ENCODE measurements at regions of chrX and their contacts with region 1.

Region 1: GRCh38 chrX:78960888-78961287 is 15.7 kb downstream of the P2RY10 start:
- DNase-seq: no peak
- H3K4me3 ChIP-seq: no peak overlapping the region
- H3K27ac ChIP-seq: no peak overlapping the region
- H3K4me1 ChIP-seq: no peaks in the 10 kb centered on the region
- H3K27me3 ChIP-seq: peaks cover 0 to 4% of the 10 kb centered on the region in 2 donors
- CTCF ChIP-seq: no peak
- POLR2A ChIP-seq: no peak

Region 2: DNA sequence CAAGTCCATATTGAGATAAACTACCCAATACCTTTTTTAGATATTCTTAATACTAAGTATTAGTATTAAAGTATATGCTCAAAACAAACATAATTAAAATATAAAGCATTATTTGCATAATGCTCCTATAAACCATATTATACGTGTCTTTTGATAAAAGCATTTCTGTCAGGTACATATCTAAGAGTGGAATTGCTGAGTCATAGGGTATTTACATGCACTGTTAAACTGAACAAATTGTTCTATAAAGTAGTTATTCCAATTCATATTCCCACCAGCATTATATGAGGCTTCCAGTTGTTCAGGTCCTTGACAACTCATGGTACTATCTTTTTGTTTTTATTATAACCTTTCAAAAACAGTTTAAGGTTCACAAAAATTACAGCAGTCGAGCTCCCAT is 1399.5 kb before region 1 on chrX:
- intact Hi-C with region 1: no loop called
- DNase-seq: no peak
- H3K4me3 ChIP-seq: no peak overlapping the region
- H3K27ac ChIP-seq: no peak overlapping the region
- H3K4me1 ChIP-seq: no peaks in the 10 kb centered on the region
- H3K27me3 ChIP-seq: no peaks in the 10 kb centered on the region
- CTCF ChIP-seq: no peak
- POLR2A ChIP-seq: no peak

Region 3: DNA sequence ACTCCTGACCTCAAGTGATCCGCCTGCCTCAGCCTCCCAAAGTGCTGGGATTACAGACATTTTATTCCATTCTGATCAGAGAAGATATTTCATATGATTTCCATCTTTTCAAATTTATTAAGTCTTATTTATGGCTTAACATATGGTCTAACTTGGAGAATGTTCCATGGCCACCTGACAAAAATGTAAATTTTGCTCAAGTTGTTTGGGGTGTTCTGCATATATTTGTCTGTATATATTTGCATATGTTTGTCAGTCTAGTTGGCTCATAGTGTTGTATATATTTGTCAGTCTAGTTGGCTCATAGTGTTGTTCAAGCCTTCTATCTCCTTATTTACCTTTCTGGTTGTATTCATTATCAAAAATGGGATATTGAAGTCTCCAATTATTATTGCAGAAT is 1158.7 kb before region 1 on chrX:
- intact Hi-C with region 1: no loop called
- DNase-seq: no peak
- H3K4me3 ChIP-seq: no peak overlapping the region
- H3K27ac ChIP-seq: no peak overlapping the region
- H3K4me1 ChIP-seq: no peaks in the 10 kb centered on the region
- H3K27me3 ChIP-seq: no peaks in the 10 kb centered on the region
- CTCF ChIP-seq: no peak
- POLR2A ChIP-seq: no peak

Region 4: GRCh38 chrX:78989349-78989748 is 28.5 kb after region 1 on chrX:
- intact Hi-C with region 1: loop called (anchors 2 kb)
- DNase-seq: no peak
- H3K4me3 ChIP-seq: no peak overlapping the region
- H3K27ac ChIP-seq: no peak overlapping the region
- H3K4me1 ChIP-seq: no peaks in the 10 kb centered on the region
- H3K27me3 ChIP-seq: peaks cover 0 to 9% of the 10 kb centered on the region in 2 donors
- CTCF ChIP-seq: no peak
- POLR2A ChIP-seq: no peak

Measured in breast epithelium (tissue), 4 donors.